Mammary epithelial cell (primary cell): ENCODE measurements at regions of chrX and their contacts with region 1.

Region 1: DNA sequence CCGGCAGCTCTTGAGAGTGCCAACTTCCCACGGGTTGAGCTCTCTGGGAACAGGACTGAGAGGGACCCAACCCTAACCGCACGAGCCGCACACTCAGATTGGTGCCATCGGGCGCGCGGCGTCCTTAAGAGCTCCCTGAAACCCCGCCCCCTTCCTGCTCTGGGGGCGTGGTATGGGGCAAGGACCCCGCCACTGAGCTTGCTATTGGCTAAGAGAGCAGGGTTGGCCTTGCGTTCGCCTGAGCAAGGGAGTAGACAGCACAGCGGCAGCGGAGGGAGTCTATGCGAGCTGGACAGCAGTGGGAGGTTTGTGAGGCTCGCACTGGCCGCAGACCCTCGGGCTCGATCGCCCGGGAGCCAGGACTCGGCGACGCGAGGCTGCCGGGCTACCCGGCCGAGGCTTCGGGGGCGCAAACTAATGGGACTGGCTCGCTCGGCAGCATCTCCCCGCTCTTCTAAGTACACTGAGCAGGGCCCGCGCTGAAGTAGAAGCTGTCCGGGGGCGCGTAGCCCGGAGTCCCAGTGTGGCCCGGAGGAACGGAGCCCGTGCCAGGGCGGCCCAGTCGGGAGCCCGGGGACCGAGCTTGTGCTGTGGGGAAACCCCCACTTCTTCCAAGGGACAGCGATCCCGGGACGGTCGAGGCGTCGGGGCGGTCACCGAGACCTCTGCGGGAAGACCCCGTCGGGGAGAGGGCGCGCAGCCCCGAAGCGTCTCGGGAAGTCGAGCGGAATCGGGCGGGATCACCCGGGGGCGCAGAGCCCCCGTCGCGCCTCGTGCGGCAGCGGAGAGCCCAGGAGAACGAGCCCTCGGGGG is at the start of gene EFNB1:
- DNase-seq: peak; percentile 90
- H3K4me3 ChIP-seq: peak within 1 kb of the TSS; percentile 66 to 74 (median 74)
- H3K27ac ChIP-seq: peak within 1 kb of the TSS; percentile 81
- H3K4me1 ChIP-seq: peaks cover 5% of the 10 kb centered on the region
- H3K27me3 ChIP-seq: no peaks in the 10 kb centered on the region
- CTCF ChIP-seq: no peak
- total RNA-seq, gene EFNB1: 143 to 167 TPM

Region 2: GRCh38 chrX:68842781-68843581 is 14.0 kb after region 1 on chrX:
- CTCF ChIA-PET with region 1: no interaction called
- dilution Hi-C with region 1: no loop called
- in situ Hi-C with region 1: no loop called
- intact Hi-C with region 1: loop called (anchors 2 kb)
- DNase-seq: peak; percentile 60
- H3K4me3 ChIP-seq: no peak overlapping the region
- H3K27ac ChIP-seq: peak overlapping the region; percentile 50
- H3K4me1 ChIP-seq: peaks cover 57% of the 10 kb centered on the region
- H3K27me3 ChIP-seq: no peaks in the 10 kb centered on the region
- CTCF ChIP-seq: peak; percentile 12 to 21

Region 3: GRCh38 chrX:68936608-68937007 is 107.7 kb after region 1 on chrX:
- CTCF ChIA-PET with region 1: no interaction called
- dilution Hi-C with region 1: no loop called
- in situ Hi-C with region 1: loop called in 1 of 2 experiments (anchors 10 kb)
- intact Hi-C with region 1: loop called (anchors 2 kb)
- DNase-seq: peak; percentile 88
- H3K4me3 ChIP-seq: no peak overlapping the region
- H3K27ac ChIP-seq: peak overlapping the region; percentile 50
- H3K4me1 ChIP-seq: peaks cover 28% of the 10 kb centered on the region
- H3K27me3 ChIP-seq: no peaks in the 10 kb centered on the region
- CTCF ChIP-seq: no peak

Region 4: GRCh38 chrX:69133921-69134542 is 305.1 kb after region 1 on chrX:
- CTCF ChIA-PET with region 1: interaction called, 9 read pairs
- dilution Hi-C with region 1: no loop called
- in situ Hi-C with region 1: loop called in 1 of 2 experiments (anchors 25 kb)
- intact Hi-C with region 1: loop called (anchors 1 kb)
- DNase-seq: peak; percentile 61
- H3K4me3 ChIP-seq: no peak overlapping the region
- H3K27ac ChIP-seq: no peak overlapping the region
- H3K4me1 ChIP-seq: no peaks in the 10 kb centered on the region
- H3K27me3 ChIP-seq: no peaks in the 10 kb centered on the region
- CTCF ChIP-seq: peak; percentile 58 to 71

Region 5: DNA sequence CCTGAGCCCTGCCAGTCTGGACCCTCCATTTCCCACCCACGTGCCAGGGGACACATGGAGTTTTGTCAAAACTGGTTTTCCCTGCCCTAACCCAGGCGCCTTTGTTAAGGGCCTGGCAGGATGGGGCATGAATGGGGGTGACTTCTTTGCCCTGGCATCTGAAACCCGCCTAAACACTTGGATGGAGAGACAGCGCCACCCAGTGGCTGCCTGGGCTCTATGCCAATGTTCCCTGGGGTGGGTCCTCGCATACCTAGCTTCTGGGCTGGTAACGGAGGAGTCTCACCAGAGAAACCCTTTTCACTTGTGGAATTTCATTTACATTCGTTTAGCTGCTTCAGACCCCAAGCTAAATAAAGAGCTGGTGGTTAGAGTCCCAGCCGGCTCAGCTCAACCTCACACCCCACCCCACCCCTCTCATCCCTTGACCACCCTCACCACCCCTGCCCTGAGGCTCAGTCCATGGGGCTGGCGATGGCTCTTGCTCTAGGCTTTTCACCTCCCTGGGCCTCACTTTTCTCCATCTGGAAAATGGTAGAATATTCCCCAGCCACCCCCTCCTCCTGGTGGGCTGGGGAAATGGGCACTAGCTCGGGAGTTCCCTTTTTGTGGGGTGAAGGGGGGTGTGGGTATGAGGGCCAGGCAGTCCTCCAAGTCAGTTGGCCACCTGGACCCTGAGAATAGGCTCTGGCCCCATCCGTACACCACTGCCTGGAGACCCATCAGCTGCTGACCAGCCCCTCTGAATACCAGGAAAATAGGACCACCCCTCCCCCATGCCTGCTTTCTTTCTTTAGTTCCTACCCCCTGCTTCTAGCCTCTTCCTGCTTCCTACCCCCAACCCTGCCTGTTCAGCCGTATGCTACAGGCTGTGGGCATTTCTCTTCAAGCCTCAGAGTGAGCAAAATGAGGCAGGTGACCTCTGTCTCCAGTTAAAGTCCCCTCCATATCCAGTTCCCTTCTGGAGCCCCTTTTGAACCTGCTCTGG is 393.5 kb after region 1 on chrX:
- CTCF ChIA-PET with region 1: interaction called, 12 read pairs
- dilution Hi-C with region 1: no loop called
- in situ Hi-C with region 1: loop called (anchors 5 kb)
- intact Hi-C with region 1: loop called (anchors 1 kb)
- DNase-seq: peak; percentile 64
- H3K4me3 ChIP-seq: no peak overlapping the region
- H3K27ac ChIP-seq: peak overlapping the region; percentile 24
- H3K4me1 ChIP-seq: no peaks in the 10 kb centered on the region
- H3K27me3 ChIP-seq: no peaks in the 10 kb centered on the region
- CTCF ChIP-seq: peak; percentile 63 to 89

Region 6: GRCh38 chrX:69257499-69258127 is 428.7 kb after region 1 on chrX:
- CTCF ChIA-PET with region 1: no interaction called
- dilution Hi-C with region 1: no loop called
- in situ Hi-C with region 1: no loop called
- intact Hi-C with region 1: no loop called
- DNase-seq: no peak
- H3K4me3 ChIP-seq: no peak overlapping the region
- H3K27ac ChIP-seq: no peak overlapping the region
- H3K4me1 ChIP-seq: no peaks in the 10 kb centered on the region
- H3K27me3 ChIP-seq: no peaks in the 10 kb centered on the region
- CTCF ChIP-seq: no peak

Region 7: DNA sequence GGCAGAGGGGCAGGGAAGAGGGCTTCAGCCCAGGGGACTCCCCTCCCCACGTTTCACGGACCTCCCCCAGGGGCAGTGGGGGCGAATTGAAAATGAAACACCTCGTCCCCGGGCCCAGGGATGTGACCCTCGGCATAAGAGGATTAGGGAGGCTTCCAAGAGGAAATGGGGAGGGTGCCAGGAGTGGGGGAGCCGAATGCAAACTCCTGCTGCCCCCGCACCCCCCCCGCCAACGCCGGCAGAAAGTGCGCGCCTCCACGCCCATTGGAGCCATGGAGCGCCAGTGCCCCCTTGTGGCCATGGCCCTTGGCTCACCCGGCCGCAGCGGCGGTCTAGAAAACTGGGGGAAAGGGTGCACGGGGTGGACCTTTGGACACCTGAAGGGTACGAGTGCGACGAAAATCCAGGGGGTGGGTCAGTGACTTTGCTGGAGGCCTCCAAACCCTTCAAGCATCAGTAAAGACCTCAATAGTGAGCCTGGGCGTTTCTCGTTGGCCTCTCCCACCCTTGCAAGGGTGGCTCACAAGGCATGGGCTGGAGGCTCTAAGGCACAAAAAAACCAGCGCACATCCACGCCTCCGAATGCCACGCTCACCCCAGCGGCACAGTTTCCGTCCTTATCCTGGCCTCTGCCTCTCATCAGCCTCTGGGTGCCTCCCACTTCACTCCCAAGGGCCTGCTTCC is 457.1 kb after region 1 on chrX:
- CTCF ChIA-PET with region 1: no interaction called
- dilution Hi-C with region 1: no loop called
- in situ Hi-C with region 1: loop called (anchors 5 to 10 kb)
- intact Hi-C with region 1: loop called (anchors 1 kb)
- DNase-seq: peak; percentile 9
- H3K4me3 ChIP-seq: peak overlapping the region in 1 of 3 experiments; percentile 43
- H3K27ac ChIP-seq: no peak overlapping the region
- H3K4me1 ChIP-seq: peaks cover 6% of the 10 kb centered on the region
- H3K27me3 ChIP-seq: no peaks in the 10 kb centered on the region
- CTCF ChIP-seq: peak; percentile 45 to 82

Region 8: DNA sequence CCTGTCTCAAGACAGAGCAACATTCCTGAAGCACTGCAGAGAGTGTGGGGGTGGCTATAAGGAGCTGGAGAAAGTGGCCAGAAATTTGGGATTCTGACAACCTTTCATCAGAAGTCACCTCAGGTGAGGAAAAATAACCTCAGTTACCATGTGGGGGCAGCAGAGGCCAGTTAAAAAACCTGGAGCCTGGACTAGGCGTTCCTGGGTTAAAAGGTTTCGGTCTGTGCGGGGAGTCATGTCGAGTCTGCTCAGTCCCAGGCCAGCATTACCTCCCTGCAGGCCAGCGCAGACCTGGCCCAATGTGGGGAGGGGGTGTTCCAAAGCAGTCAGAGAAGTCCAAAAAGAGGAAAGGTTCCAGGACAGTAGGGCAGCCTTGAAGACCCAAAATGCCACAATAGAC is 664.2 kb after region 1 on chrX:
- CTCF ChIA-PET with region 1: no interaction called
- dilution Hi-C with region 1: no loop called
- in situ Hi-C with region 1: no loop called
- intact Hi-C with region 1: loop called (anchors 10 kb)
- DNase-seq: peak; percentile 20
- H3K4me3 ChIP-seq: no peak overlapping the region
- H3K27ac ChIP-seq: no peak overlapping the region
- H3K4me1 ChIP-seq: peaks cover 5% of the 10 kb centered on the region
- H3K27me3 ChIP-seq: no peaks in the 10 kb centered on the region
- CTCF ChIP-seq: peak; percentile 44 to 49